ENCODE measurements at regions of chr1 and their contacts with region 1.

Region 1: DNA sequence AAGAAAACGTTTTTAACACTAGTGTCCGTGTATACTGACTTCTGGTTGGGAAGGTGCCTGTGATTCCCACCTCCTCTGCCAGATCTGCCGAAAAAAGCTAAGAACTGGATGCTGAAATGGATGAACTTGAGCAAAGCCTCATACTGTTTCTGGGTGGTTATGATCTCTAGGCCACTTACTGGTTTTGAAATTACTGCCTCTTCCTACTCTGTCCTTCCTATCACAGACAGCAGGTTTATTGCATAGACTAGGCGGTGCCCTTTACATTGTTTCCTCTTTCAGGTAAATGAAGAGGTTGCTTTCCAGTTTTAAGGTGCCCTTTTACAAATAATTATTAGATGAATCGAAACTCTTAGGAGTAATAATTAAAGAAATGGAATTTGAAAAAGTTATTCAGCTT is 27.5 kb downstream of the PEX14 start:
- DNase-seq: no peak
- H3K4me3 ChIP-seq: no peak overlapping the region
- H3K27ac ChIP-seq: no peak overlapping the region
- H3K4me1 ChIP-seq: no peaks in the 10 kb centered on the region
- H3K27me3 ChIP-seq: no peaks in the 10 kb centered on the region
- CTCF ChIP-seq: no peak
- POLR2A ChIP-seq: no peak

Region 2: GRCh38 chr1:10679496-10680220 is 177.5 kb after region 1 on chr1:
- intact Hi-C with region 1: no loop called
- DNase-seq: peak; percentile 34
- H3K4me3 ChIP-seq: no peak overlapping the region
- H3K27ac ChIP-seq: no peak overlapping the region
- H3K4me1 ChIP-seq: no peaks in the 10 kb centered on the region
- H3K27me3 ChIP-seq: no peaks in the 10 kb centered on the region
- CTCF ChIP-seq: no peak
- POLR2A ChIP-seq: no peak

Region 3: DNA sequence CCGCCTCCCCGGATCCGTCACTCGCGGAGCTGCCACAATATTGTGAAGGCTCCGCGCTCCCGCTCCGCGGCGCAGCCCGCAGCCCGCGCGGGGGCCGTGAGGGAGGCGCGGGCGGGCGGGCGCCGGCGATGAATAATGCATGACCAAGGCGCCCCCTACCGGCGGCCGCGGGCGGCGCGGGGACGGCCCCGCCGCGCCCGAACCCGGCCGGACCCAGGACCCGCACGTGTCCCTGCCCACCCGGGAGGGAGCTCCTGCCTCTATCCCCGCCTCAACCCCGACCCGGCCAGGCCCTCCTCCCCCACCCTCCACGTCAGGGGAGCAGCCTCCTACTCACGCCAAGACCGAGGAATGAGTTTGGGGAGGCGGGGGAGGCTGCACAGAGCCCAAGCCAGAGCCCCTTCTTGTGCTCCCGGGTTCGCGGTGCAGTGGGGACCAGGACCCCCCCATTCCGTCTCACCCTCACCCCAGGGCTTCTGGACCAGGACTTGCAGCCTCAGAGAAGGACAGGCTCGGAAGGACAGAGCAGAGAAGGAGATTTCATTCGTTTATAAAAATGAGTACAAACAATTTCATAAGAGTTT is 365.0 kb after region 1 on chr1:
- intact Hi-C with region 1: loop called (anchors 5 kb)
- DNase-seq: peak; percentile 79
- H3K4me3 ChIP-seq: peak overlapping the region; percentile 45 to 48
- H3K27ac ChIP-seq: no peak overlapping the region
- H3K4me1 ChIP-seq: peaks cover 11% of the 10 kb centered on the region
- H3K27me3 ChIP-seq: no peaks in the 10 kb centered on the region
- CTCF ChIP-seq: peak; percentile 72 to 87 (median 85)
- POLR2A ChIP-seq: no peak